ENCODE measurements at regions of chr1 and their contacts with region 1.

Region 1: GRCh38 chr1:42924082-42924850 is 34.4 kb downstream of the SLC2A1 start:
- DNase-seq: peak; percentile 95
- ATAC-seq: peak; percentile 88
- H3K4me3 Mint-ChIP-seq: peak overlapping the region; percentile 89
- H3K27ac Mint-ChIP-seq: peak overlapping the region; percentile 94
- H3K4me1 Mint-ChIP-seq: peaks cover 39% of the 10 kb centered on the region
- H3K27me3 Mint-ChIP-seq: no peaks in the 10 kb centered on the region
- CTCF ChIP-seq: no peak

Region 2: DNA sequence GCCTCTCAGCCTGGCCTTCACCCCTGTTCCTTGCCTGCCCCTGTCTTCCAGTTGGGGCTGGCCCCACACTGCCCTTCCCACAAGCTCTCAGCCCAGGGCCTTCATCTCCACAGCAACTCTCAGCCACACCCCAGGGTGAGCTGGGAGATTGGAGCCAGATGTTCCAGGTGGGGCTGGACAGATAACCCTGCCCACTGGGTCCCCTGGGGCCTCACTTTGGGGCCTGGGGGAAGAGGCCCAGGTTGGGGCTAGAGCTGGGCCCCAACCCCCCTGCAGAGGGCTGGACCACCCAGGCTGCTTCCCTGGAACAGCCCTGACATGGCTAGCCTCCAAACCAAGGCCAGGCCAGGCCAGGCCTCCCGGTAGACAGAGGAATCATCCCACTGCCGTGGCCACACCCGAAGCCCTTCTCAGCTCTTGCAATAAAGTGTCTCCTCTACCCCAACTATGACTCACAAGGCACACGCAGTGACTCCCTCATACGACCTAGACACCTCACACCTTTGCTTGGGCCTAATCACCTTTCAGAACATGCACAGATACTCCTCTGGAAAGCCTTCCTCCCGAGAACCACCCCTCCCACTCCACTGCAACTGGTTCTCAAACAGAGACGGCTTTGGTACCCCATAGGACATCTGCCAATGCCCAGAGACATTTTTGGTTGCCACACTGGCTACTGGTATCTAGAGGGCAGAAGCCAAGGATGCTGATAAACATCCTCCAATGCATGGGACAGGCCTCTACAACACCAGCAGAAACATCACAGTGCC is 12.2 kb after region 1 on chr1:
- CTCF ChIA-PET with region 1: interaction called, 17 read pairs
- POLR2A ChIA-PET with region 1: interaction called, 15 read pairs
- intact Hi-C with region 1: no loop called
- DNase-seq: peak; percentile 60
- ATAC-seq: peak; percentile 45
- H3K4me3 Mint-ChIP-seq: no peak overlapping the region
- H3K27ac Mint-ChIP-seq: peak overlapping the region; percentile 79
- H3K4me1 Mint-ChIP-seq: peaks cover 94% of the 10 kb centered on the region
- H3K27me3 Mint-ChIP-seq: no peaks in the 10 kb centered on the region
- CTCF ChIP-seq: no peak

Region 3: DNA sequence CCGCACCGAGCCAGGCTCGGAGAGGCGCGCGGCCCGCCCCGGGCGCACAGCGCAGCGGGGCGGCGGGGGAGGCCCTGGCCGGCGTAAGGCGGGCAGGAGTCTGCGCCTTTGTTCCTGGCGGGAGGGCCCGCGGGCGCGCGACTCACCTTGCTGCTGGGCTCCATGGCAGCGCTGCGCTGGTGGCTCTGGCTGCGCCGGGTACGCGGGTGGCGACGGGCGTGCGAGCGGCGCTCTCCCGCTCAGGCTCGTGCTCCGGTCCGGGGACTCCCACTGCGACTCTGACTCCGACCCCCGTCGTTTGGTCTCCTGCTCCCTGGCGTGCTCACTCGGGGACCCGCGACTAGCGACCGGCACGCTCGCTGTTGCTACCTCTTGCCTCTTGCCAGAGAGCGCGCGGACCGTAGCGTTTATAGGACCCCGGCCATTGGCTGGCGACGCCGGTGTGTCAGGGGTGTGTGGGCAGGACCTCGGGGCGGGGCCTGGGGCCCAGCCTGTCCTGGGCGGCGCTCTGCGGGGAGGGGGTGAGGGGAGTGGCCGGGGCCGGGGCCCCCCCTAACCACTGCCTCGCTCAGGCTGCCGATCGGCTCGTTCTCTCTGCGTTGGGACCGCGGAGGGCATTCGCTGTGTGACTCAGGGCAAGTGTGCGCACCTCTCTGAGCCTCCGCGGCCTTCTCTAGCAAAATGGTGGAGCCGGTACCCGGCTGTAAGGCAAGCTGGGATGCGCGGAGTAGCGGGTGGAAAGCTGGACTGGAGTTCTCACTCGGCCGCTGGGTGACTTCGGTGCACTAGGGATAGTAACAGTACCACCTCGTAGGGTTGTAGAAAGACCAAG is 34.4 kb after region 1 on chr1 and contains the start of gene SLC2A1:
- CTCF ChIA-PET with region 1: interaction called, 7 read pairs
- POLR2A ChIA-PET with region 1: interaction called, 7 read pairs
- intact Hi-C with region 1: loop called (anchors 5 kb)
- DNase-seq: peak; percentile 97
- ATAC-seq: peak; percentile 89
- H3K4me3 Mint-ChIP-seq: peak within 1 kb of the TSS; percentile 96
- H3K27ac Mint-ChIP-seq: peak within 1 kb of the TSS; percentile 100
- H3K4me1 Mint-ChIP-seq: peaks cover 46% of the 10 kb centered on the region
- H3K27me3 Mint-ChIP-seq: peaks cover 7% of the 10 kb centered on the region
- CTCF ChIP-seq: no peak
- total RNA-seq, gene SLC2A1: 158 to 162 TPM

Region 4: DNA sequence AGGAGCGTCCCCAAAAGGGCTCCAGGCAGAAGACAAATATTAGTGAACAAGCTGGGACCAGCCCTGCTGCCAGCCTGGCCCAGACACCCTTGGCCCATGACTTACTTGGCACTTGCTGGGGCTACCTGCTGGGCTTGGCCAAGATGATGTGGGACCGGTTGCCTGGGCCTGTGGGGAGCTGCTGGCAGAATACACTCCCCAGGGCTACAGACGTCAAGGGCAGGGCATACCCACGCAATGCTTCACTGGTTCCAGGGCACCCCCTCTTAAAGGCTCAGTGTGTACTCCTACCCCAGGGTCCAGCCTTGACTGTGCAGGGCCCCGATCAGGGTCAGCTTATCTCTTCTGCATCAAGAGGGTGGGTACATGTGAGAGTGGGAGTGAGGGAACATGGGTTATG is 140.9 kb after region 1 on chr1:
- CTCF ChIA-PET with region 1: interaction called, 159 read pairs
- POLR2A ChIA-PET with region 1: interaction called, 4 read pairs
- intact Hi-C with region 1: no loop called
- DNase-seq: no peak
- ATAC-seq: no peak
- H3K4me3 Mint-ChIP-seq: no peak overlapping the region
- H3K27ac Mint-ChIP-seq: no peak overlapping the region
- H3K4me1 Mint-ChIP-seq: peaks cover 6% of the 10 kb centered on the region
- H3K27me3 Mint-ChIP-seq: no peaks in the 10 kb centered on the region
- CTCF ChIP-seq: no peak